ENCODE measurements at regions of chr9 and their contacts with region 1.

Region 1: DNA sequence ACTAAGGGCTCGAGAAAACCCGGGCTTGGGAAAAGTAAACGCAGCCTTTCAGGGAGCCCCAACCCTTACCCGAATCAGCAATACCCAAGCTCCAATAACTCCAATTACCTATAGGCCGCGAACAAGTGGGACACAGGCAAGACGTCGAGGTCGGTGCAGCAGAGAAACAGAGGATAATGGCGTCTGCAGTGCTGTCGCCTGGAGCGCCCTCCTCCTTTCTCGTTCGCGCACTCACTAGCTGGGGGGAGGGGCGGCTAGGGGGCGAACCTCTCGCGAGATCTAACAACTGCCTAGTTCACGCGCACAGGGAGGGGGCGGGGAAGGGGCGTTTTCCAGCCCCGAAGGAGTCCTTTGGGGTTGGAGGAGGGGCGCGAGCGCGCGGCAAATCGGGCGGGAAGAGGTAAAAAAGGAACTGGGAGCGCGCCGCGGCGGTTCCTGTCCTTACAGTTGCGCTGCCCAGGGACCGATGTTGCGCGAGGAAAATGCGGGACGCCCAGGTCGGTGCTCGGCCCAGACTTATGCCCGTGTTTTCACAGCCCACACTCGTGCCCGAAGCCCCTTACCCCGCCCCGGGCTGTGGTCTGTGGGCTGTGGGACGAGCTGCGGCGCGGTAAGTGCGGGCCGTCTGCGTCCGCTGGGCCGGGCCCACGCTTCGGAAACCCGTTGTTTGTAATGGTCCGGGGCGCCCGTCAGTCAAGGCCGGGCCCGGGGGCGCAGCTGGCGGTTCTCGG is at the start of gene RMI1:
- DNase-seq: peak; percentile 99
- ATAC-seq: peak; percentile 95
- total RNA-seq, gene RMI1: 7.3 TPM

Region 2: DNA sequence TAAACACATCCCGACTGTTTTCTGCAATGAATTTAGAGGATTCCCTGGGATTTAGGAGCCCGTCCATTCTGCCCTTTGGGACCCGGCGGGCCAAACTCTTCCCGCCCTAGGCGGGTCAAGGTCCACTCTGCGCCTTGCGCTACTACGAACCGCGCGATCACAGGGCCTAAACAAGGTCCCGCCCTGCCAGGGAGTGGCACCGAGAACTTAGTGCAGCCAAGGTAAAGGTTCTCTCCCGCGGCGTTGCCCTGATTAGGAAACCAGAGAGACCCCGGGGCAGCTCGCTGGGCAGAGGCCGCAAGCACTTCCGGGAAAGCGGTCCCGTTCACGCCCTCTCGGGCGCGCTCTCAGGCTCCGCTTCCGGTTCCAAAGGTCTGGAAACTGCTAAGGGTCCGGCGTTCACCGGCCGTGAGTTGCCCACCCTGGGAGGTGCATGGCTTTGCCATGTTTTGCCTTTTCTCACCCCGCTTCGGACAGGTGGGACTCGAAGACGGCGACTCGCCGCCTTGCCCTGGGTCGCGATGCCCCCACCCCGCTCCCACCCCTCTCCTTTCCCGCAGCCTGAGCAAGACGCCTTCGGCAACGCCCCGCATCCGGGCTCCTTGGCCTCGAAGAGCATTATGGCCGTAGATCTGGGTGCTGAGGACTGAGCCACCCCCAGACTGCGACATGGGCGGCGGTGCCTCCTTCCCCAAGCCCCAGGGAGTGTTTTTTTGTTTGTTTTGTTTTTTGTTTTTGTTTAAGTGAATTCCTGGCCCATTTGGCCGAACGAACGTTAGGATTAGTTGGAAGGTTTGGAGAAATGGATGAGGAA is 23.9 kb before region 1 on chr9:
- intact Hi-C with region 1: loop called (anchors 2 kb)
- DNase-seq: peak; percentile 89
- ATAC-seq: peak; percentile 93

Region 3: DNA sequence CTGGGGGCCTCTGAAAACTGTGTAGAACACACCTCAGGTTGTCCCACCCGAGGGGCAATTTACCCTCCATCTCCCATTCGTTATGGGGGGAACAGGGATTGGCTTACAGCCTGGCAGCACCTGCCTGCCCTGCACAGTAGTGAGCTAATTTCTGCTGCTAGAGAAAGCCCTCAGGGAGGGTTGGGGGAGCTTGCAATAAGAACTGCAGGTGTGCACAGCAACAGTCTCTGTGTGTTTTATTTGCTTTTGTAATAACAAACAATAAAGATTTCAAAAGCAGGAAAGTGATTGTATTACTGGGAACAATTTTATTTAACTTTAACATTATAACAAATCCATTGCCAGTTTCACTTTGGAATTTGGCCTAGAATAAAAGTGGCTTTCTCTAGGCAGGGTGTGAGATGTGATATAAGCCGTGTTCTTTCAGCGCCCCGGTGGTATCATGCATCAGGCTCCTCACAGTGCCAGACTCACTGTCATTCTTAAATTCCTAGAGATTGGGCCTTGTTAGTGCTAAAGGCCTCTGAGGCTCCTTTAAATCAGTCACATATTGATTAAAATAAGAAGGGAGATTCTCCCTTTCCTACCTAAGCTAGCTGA is 81.1 kb after region 1 on chr9:
- intact Hi-C with region 1: loop called (anchors 2 kb)
- DNase-seq: no peak
- ATAC-seq: peak; percentile 88

Measured in Right ventricle myocardium inferior (tissue), 1 donor.